IMR-90 (cell line): ENCODE measurements at regions of chr5 and their contacts with region 1.

Region 1: GRCh38 chr5:132820162-132820754 is 7.2 kb downstream of the SOWAHA start:
- DNase-seq: peak; percentile 90
- ATAC-seq: peak; percentile 71
- H3K4me3 ChIP-seq: no peak overlapping the region
- H3K27ac ChIP-seq: peak overlapping the region; percentile 5; the same call in 1 of the 2 replicates
- H3K4me1 ChIP-seq: peaks cover 8% of the 10 kb centered on the region
- H3K27me3 ChIP-seq: no peaks in the 10 kb centered on the region
- CTCF ChIP-seq: peak; percentile 90
- POLR2A ChIP-seq: no peak
- RAD21 ChIP-seq: peak; percentile 92

Region 2: DNA sequence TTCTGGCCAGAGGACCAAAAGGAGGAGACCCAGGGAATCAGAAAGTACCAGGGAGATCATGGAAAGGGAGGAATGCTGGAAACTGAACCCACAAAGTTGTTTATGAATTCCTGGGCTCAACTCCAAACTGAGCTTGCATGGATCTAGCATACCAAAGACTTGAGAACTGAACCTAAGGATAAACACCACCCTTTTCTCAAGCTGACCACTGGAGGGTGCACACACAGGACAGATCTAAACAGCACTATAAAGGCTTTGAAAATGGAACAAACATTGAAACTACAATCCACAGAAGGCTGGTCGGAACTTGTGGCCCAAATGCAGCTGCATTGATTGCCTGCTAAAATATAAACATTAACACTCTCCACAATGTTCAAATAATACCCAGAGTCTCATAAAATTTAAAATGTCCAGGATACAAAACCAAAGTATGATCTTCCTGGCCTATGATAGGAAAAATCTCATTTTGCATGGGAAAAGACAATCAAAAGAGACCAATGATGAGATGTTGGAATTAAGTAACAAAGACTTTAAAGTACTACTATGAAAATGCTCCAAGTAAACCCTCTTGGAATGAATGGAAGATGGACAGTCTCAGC is 314.1 kb before region 1 on chr5:
- CTCF ChIA-PET with region 1: interaction called, 3 read pairs
- POLR2A ChIA-PET with region 1: no interaction called
- dilution Hi-C with region 1: no loop called
- in situ Hi-C with region 1: no loop called
- intact Hi-C with region 1: loop called (anchors 5 kb)
- DNase-seq: peak; percentile 98
- ATAC-seq: peak; percentile 91
- H3K4me3 ChIP-seq: no peak overlapping the region
- H3K27ac ChIP-seq: peak overlapping the region; percentile 99
- H3K4me1 ChIP-seq: peaks cover 26% of the 10 kb centered on the region
- H3K27me3 ChIP-seq: no peaks in the 10 kb centered on the region
- CTCF ChIP-seq: peak; percentile 85
- POLR2A ChIP-seq: no peak
- RAD21 ChIP-seq: peak; percentile 65

Region 3: DNA sequence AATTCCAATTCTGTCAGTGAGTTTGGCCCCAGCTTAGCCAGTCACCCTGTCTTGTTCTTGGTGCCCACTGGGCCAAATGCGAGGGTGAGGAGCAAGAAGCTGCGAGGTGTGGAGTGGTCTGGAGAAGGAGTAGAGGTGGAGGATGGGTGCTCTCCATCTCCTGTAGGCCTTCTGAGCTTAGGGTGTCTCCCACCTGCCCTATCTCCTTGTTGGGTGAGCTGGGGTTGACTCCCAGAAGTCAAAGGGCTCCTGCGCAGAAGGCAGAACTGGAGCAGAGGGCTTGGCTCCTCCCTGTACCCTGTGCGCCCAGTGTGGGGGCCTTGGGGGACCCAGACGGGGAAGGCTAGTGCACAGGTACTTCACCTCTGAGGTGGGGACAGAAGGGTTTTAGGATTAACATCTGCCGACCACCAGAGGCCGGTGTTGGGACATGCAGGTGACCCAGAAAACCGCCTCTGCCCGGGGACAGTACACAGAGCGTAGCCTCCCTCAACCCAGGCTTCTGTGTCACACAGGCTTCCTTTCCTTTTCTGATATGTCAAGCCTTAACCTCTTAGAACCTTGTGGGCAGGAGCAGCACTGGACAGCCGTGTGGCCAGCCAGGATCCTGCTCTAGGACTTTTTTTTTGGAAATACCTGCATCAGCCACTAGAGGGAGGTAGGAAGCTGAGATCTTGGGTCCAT is 293.8 kb before region 1 on chr5:
- CTCF ChIA-PET with region 1: no interaction called
- POLR2A ChIA-PET with region 1: no interaction called
- dilution Hi-C with region 1: no loop called
- in situ Hi-C with region 1: no loop called
- intact Hi-C with region 1: loop called (anchors 5 kb)
- DNase-seq: peak; percentile 50
- ATAC-seq: peak; percentile 95
- H3K4me3 ChIP-seq: no peak overlapping the region
- H3K27ac ChIP-seq: no peak overlapping the region
- H3K4me1 ChIP-seq: peaks cover 1% of the 10 kb centered on the region; the same call in 1 of the 2 replicates
- H3K27me3 ChIP-seq: peaks cover 13% of the 10 kb centered on the region
- CTCF ChIP-seq: peak; percentile 74
- POLR2A ChIP-seq: no peak
- RAD21 ChIP-seq: peak; percentile 72

Region 4: GRCh38 chr5:132662925-132663770 is 157.1 kb before region 1 on chr5:
- CTCF ChIA-PET with region 1: no interaction called
- POLR2A ChIA-PET with region 1: no interaction called
- dilution Hi-C with region 1: no loop called
- in situ Hi-C with region 1: no loop called
- intact Hi-C with region 1: loop called (anchors 5 kb)
- DNase-seq: peak; percentile 21
- ATAC-seq: peak; percentile 86
- H3K4me3 ChIP-seq: no peak overlapping the region
- H3K27ac ChIP-seq: no peak overlapping the region
- H3K4me1 ChIP-seq: peaks cover 3% of the 10 kb centered on the region; the same call in 1 of the 2 replicates
- H3K27me3 ChIP-seq: no peaks in the 10 kb centered on the region
- CTCF ChIP-seq: no peak
- POLR2A ChIP-seq: no peak
- RAD21 ChIP-seq: no peak

Region 5: GRCh38 chr5:132753135-132753987 is 66.9 kb before region 1 on chr5:
- CTCF ChIA-PET with region 1: interaction called, 22 read pairs
- POLR2A ChIA-PET with region 1: no interaction called
- dilution Hi-C with region 1: no loop called
- in situ Hi-C with region 1: no loop called
- intact Hi-C with region 1: loop called (anchors 1 kb)
- DNase-seq: no peak
- ATAC-seq: peak; percentile 83
- H3K4me3 ChIP-seq: no peak overlapping the region
- H3K27ac ChIP-seq: no peak overlapping the region
- H3K4me1 ChIP-seq: peaks cover 2% of the 10 kb centered on the region; the same call in 1 of the 2 replicates
- H3K27me3 ChIP-seq: peaks cover 8% of the 10 kb centered on the region
- CTCF ChIP-seq: peak; percentile 40
- POLR2A ChIP-seq: no peak
- RAD21 ChIP-seq: peak; percentile 39

Region 6: DNA sequence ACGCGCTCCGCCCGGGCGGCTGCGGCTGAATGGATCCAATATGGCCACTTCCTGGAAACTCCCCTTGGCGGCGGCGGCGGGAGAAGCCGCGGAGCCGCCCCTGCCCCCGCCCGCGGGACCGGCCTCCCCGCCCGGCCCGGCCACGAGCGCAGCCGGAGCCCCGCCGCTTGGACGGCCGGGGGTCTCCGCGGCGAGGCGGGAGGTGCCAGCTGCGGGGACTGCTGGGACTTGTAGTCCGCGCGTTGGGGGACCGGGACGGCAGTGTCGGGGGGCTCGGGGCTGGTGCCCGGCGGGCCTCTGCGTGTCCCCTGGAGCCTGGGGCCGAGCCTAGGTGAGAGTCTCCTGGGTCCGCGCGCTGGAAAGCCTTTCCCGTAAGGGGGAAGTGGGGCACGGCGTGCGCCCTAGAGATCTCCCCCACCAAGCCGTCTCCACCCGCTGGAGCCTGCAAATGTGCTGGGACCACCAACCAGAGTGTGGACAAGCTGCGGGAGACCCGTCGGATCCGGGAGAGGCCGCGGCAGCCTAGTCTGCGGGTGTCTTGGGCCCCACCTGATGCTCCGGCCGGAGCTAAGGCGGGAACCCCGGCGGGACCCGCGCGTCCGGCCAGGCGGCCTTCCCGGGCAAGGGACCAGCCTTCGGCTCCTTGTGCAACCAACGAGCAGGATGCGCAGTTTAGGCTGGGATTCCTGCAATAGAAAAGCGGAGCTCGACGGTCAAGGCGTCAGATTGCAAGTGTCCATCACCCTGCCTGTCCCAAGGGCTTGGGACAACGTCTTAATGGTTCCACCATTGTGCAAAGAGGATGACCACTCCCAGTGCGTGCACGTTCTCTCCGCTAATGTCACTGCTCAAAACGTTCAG is 42.8 kb before region 1 on chr5 and contains the start of gene SEPTIN8:
- CTCF ChIA-PET with region 1: interaction called, 3 read pairs
- POLR2A ChIA-PET with region 1: no interaction called
- dilution Hi-C with region 1: no loop called
- in situ Hi-C with region 1: no loop called
- intact Hi-C with region 1: loop called (anchors 2 kb)
- DNase-seq: no peak
- ATAC-seq: peak; percentile 72
- H3K4me3 ChIP-seq: peak within 1 kb of the TSS; percentile 65
- H3K27ac ChIP-seq: peak within 1 kb of the TSS; percentile 61
- H3K4me1 ChIP-seq: peaks cover 15% of the 10 kb centered on the region
- H3K27me3 ChIP-seq: no peaks in the 10 kb centered on the region
- CTCF ChIP-seq: no peak
- POLR2A ChIP-seq: no peak
- RAD21 ChIP-seq: no peak
- total RNA-seq, gene SEPTIN8: 60.5 and 67.2 TPM in 2 replicates